Dorsolateral prefrontal cortex (tissue), 120 donors: ENCODE measurements at regions of chr3 and their contacts with region 1.

Region 1: DNA sequence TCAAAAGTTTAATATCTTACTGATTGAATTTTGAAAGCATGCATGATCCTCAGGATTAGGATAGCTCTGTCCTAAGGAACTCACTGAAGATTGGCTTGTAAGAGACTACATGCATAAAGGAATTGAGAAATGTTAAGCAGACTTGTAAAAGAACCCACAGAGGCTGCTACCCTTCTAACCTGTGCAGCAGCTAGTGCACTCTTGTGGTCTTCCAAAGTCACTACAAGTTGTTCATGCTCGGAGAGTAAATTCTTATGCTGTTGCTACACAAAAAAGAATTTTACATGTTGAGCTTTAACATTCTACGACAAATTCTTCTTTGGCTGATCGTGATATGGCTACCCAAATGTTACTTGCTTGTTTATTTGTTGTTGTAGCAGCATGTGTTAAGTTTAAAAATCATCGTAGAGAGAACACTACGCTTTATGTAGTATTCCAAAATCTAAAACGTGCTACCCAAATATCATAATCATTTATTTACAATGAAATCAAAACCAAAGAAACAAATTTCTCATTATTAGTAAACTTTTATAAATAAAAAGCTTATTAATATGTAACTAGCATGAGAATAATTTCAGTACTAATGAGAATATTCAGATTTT is 55.0 kb downstream of the GOLIM4 start:
- DNase-seq: no peak
- H3K4me3 ChIP-seq: no peak overlapping the region
- H3K27ac ChIP-seq: peak overlapping the region in 5 of 59 donors; percentile 1 to 43 (median 9)
- H3K27me3 ChIP-seq: no peaks in the 10 kb centered on the region
- CTCF ChIP-seq: peak; percentile 34 to 77 (median 65)

Region 2: GRCh38 chr3:167380004-167380689 is 660.6 kb before region 1 on chr3 and contains the start of gene ZBBX:
- intact Hi-C with region 1: loop called in 1 of 2 experiments (anchors 5 kb)
- DNase-seq: peak; percentile 61 to 96 (median 92)
- H3K4me3 ChIP-seq: peak within 1 kb of the TSS; percentile 35 to 82 (median 65)
- H3K27ac ChIP-seq: peak within 1 kb of the TSS in 1 of 59 donors; percentile 46
- H3K27me3 ChIP-seq: no peaks in the 10 kb centered on the region
- CTCF ChIP-seq: peak; percentile 47 to 96 (median 92)
- total RNA-seq, gene ZBBX: 6.5 to 49.3 (median 20.2) TPM